ENCODE measurements at regions of chr5 and their contacts with region 1.

Region 1: DNA sequence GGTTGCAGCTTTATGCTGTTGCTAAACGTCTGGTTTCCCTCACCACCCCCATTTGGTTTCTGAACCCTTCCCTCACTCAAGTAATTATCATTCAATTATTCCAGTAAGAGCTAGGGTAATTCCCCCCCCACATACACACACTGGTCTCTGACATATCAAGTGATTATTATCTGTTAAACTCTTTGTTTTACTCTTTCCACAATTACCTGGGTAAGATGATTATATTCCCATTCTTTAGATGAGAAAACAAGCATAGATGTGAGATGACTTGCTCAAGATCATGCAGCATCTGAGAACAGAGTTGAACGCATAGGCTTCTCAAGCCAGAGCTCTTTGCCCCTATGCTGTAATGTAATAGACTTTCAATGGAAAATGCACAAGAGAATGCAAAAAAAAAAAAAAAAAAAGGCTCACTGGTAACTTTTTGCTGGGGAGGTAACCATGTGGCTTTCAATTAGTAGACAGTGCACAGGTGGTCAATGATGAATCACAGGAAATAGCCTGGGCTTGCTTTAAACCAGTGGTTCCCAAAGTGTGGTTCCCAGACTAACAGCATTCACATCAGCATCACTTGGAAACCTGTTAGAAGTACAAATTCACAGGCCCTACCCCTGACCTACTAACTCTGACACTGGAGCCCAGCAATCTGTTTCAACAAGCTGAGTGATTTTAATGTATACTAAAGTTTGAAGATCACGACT is 87.6 kb downstream of the PIK3R1 start:
- DNase-seq: no peak
- H3K4me3 ChIP-seq: no peak overlapping the region
- H3K27ac ChIP-seq: peak overlapping the region in 1 of 2 donors; percentile 64
- H3K4me1 ChIP-seq: no peaks in the 10 kb centered on the region
- H3K27me3 ChIP-seq: no peaks in the 10 kb centered on the region
- CTCF ChIP-seq: no peak
- POLR2A ChIP-seq: no peak

Region 2: GRCh38 chr5:68839019-68839552 is 535.9 kb after region 1 on chr5:
- intact Hi-C with region 1: loop called (anchors 5 kb)
- DNase-seq: peak in 1 of 2 donors; percentile 60
- H3K4me3 ChIP-seq: no peak overlapping the region
- H3K27ac ChIP-seq: peak overlapping the region; percentile 65 to 93
- H3K4me1 ChIP-seq: no peaks in the 10 kb centered on the region
- H3K27me3 ChIP-seq: no peaks in the 10 kb centered on the region
- CTCF ChIP-seq: no peak
- POLR2A ChIP-seq: no peak